B cell (primary cell): ENCODE measurements at regions of chr6 and their contacts with region 1.

Region 1: GRCh38 chr6:15879382-15880261 is 216.8 kb upstream of the DTNBP1 start:
- DNase-seq: peak; percentile 60
- ATAC-seq: peak; percentile 75
- H3K4me3 ChIP-seq: no peak overlapping the region
- H3K4me3 Mint-ChIP-seq: peak overlapping the region; percentile 43
- H3K27ac ChIP-seq: peak overlapping the region; percentile 24 to 51
- H3K27ac Mint-ChIP-seq: peak overlapping the region; percentile 71
- H3K4me1 ChIP-seq: peaks cover 25 to 34% of the 10 kb centered on the region in 2 donors
- H3K4me1 Mint-ChIP-seq: peaks cover 44% of the 10 kb centered on the region
- H3K27me3 ChIP-seq: no peaks in the 10 kb centered on the region
- H3K27me3 Mint-ChIP-seq: no peaks in the 10 kb centered on the region
- CTCF ChIP-seq: no peak

Region 2: DNA sequence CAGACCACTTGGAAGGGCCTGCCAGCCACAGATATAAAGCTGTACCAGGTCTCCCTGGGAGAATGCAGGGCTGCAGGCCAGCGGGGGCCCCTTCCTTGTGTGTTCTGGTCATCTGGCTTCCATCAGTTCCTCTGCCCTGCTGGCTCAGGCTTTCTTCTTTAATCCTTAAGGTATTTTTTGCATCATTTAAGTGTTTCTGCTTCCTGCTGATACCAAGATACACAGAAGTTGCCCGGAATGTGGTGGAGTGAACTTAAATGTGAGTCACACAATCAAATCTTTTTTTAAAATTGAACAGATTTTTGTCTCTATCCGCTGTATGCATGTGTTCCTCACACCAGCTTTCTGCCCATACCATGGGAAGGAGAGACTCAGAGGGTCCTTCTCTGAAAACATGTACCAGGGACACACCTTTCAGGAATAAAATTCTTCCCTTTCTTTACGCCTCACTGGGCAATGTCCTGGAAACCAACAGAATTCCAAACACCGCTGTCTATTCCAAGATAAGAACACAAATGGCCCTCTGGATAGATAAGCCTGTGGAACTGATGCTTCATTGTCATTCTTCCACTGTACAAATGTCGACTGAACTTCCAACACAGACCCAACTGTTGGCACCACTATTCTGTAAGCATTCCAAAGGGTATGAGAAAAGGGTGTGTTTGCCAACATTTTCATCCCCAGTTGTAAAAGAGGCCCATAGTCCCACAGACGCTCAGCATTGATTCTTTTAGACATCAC is 43.1 kb after region 1 on chr6:
- CTCF ChIA-PET with region 1: no interaction called
- POLR2A ChIA-PET with region 1: no interaction called
- intact Hi-C with region 1: no loop called
- DNase-seq: no peak
- ATAC-seq: no peak
- H3K4me3 ChIP-seq: no peak overlapping the region
- H3K4me3 Mint-ChIP-seq: no peak overlapping the region
- H3K27ac ChIP-seq: no peak overlapping the region
- H3K27ac Mint-ChIP-seq: no peak overlapping the region
- H3K4me1 ChIP-seq: no peaks in the 10 kb centered on the region
- H3K4me1 Mint-ChIP-seq: no peaks in the 10 kb centered on the region
- H3K27me3 ChIP-seq: no peaks in the 10 kb centered on the region
- H3K27me3 Mint-ChIP-seq: no peaks in the 10 kb centered on the region
- CTCF ChIP-seq: no peak

Region 3: DNA sequence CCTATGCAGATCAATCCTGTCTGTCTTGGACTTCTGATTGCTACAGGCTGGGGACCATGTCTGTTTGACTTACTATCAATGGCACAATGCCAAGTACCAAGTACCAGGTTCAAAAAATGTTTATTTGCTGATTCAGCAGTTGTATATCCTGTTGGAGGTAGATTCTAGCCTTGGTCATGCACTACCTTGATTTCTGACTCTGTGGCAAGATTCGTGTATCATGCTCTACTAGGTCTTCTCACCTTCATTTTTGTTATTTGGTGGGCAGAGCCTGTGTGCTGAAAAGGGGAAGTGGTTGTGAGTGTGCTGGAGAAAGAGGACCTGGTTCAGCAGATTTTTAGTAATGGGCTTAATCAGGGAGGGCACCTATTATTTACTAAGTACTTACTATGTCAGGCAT is 56.9 kb after region 1 on chr6:
- CTCF ChIA-PET with region 1: no interaction called
- POLR2A ChIA-PET with region 1: no interaction called
- intact Hi-C with region 1: loop called (anchors 10 kb)
- DNase-seq: peak; percentile 76
- ATAC-seq: peak; percentile 95
- H3K4me3 ChIP-seq: no peak overlapping the region
- H3K4me3 Mint-ChIP-seq: peak overlapping the region; percentile 0
- H3K27ac ChIP-seq: no peak overlapping the region
- H3K27ac Mint-ChIP-seq: peak overlapping the region; percentile 37
- H3K4me1 ChIP-seq: peaks cover 19 to 21% of the 10 kb centered on the region in 2 donors
- H3K4me1 Mint-ChIP-seq: peaks cover 19% of the 10 kb centered on the region
- H3K27me3 ChIP-seq: no peaks in the 10 kb centered on the region
- H3K27me3 Mint-ChIP-seq: no peaks in the 10 kb centered on the region
- CTCF ChIP-seq: no peak